ENCODE measurements at regions of chr6 and their contacts with region 1.

Region 1: GRCh38 chr6:79078075-79079025 is at the start of gene PHIP:
- DNase-seq: peak in 1 of 2 donors; percentile 96
- H3K4me3 ChIP-seq: peak within 1 kb of the TSS; percentile 85 to 92
- H3K27ac ChIP-seq: peak within 1 kb of the TSS; percentile 99
- H3K4me1 ChIP-seq: peaks cover 34% of the 10 kb centered on the region
- H3K27me3 ChIP-seq: no peaks in the 10 kb centered on the region
- CTCF ChIP-seq: no peak
- POLR2A ChIP-seq: peak in 1 of 2 donors; percentile 57
- total RNA-seq, gene PHIP: 32.9 TPM

Region 2: DNA sequence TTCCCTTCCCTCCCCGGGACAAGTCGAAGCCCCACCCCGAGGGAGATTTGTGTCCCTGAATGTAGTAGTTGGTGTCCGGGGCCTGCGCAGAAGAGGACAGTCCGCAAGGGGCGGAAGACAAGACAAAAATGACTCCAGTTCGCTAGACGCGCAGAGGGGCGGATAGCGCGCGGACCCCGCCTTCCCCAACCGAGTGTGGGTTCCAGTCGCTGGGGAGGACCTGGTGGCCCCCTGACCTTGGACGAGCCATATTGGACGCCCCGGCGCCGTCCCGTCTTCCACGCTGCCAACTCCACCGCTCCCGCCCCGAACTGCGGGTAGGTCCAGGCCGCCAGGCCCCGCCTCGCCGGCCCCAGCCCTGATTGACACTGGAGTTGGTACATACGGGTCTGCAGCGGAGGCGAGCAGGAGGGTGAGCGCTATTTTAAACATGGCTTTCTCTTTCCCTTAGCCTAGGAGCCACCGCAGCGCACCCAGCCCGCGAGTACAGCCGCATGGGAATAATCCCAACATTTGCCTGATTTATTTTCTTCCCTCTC is 155.3 kb after region 1 on chr6:
- intact Hi-C with region 1: loop called (anchors 5 kb)
- DNase-seq: peak in 1 of 2 donors; percentile 93
- H3K4me3 ChIP-seq: peak overlapping the region; percentile 55 to 60
- H3K27ac ChIP-seq: peak overlapping the region; percentile 83
- H3K4me1 ChIP-seq: peaks cover 14% of the 10 kb centered on the region
- H3K27me3 ChIP-seq: no peaks in the 10 kb centered on the region
- CTCF ChIP-seq: peak in 1 of 3 experiments; percentile 39
- POLR2A ChIP-seq: no peak